ENCODE measurements at regions of chr1 and their contacts with region 1.

Region 1: GRCh38 chr1:20574686-20575540 is 14.0 kb upstream of the CDA start:
- DNase-seq: peak; percentile 87
- H3K4me3 ChIP-seq: no peak overlapping the region
- H3K27ac ChIP-seq: no peak overlapping the region
- H3K4me1 ChIP-seq: peaks cover 5% of the 10 kb centered on the region
- H3K27me3 ChIP-seq: peaks cover 5 to 6% of the 10 kb centered on the region in 2 experiments
- CTCF ChIP-seq: peak; percentile 74 to 88
- POLR2A ChIP-seq: no peak

Region 2: GRCh38 chr1:20376880-20377494 is 197.9 kb before region 1 on chr1:
- CTCF ChIA-PET with region 1: no interaction called
- POLR2A ChIA-PET with region 1: no interaction called
- dilution Hi-C with region 1: no loop called
- intact Hi-C with region 1: no loop called
- DNase-seq: peak; percentile 58
- H3K4me3 ChIP-seq: no peak overlapping the region
- H3K27ac ChIP-seq: no peak overlapping the region
- H3K4me1 ChIP-seq: no peaks in the 10 kb centered on the region
- H3K27me3 ChIP-seq: no peaks in the 10 kb centered on the region
- CTCF ChIP-seq: peak; percentile 73 to 91
- POLR2A ChIP-seq: no peak

Region 3: GRCh38 chr1:20507564-20508410 is 67.1 kb before region 1 on chr1 and contains the start of gene MUL1:
- CTCF ChIA-PET with region 1: interaction called, 3 read pairs
- POLR2A ChIA-PET with region 1: no interaction called
- dilution Hi-C with region 1: no loop called
- intact Hi-C with region 1: loop called (anchors 2 kb)
- DNase-seq: peak; percentile 88
- H3K4me3 ChIP-seq: peak within 1 kb of the TSS; percentile 70 to 94 (median 94)
- H3K27ac ChIP-seq: peak within 1 kb of the TSS; percentile 80
- H3K4me1 ChIP-seq: peaks cover 11% of the 10 kb centered on the region
- H3K27me3 ChIP-seq: peaks cover 2 to 3% of the 10 kb centered on the region in 2 experiments
- CTCF ChIP-seq: no peak
- POLR2A ChIP-seq: peak; percentile 79
- total RNA-seq, gene MUL1: 23.9 and 28.3 TPM in 2 replicates

Region 4: DNA sequence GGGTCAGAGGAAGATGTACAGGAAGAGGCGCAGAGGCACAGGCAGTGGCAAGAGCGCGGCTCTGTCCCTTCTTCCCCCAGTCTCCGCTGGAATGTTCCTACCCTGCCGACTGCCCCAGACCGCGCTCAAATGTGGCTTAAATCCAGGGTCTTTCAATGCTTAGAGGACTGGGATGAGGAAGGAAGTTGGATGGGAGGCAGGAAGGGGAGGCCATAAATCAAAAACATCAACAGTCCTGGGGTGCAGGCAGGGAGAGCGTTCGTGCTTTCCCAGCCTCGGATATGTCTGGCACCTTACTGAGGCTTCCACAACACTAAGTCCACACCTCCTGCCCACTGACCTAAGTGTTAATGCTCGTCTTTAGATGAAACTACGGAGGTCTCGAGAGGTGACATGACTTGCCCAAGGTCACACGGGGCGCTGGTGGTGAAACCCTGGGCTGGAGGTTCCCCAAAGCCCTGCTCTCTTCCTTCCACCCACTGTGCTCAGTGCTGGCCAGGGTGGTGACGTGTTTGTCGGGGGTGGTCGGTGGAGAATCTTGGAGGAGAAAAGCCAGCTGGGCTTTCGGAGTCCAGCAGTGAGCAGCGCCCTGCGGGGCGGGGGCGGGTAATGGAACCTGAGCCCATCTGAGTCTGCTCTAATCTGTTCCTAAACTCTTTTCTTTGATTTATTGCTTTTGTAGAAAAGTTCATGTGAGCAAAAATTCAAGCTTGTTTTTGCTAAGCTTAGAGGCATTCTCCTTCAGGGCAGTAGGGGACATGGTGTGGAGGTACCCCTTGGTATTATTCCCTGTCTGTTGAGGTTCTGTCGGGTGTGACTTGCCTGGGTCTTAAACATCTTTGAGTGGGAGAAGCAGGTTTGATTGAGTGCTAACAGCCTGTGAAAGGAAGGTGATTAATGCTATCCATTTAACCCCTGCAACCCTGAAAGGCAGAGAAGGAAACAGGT is 14.7 kb after region 1 on chr1:
- CTCF ChIA-PET with region 1: interaction called, 25 read pairs
- POLR2A ChIA-PET with region 1: no interaction called
- dilution Hi-C with region 1: no loop called
- intact Hi-C with region 1: no loop called
- DNase-seq: peak; percentile 88
- H3K4me3 ChIP-seq: peak overlapping the region in 1 of 3 experiments; percentile 20
- H3K27ac ChIP-seq: no peak overlapping the region
- H3K4me1 ChIP-seq: peaks cover 15% of the 10 kb centered on the region
- H3K27me3 ChIP-seq: peaks cover 2 to 13% of the 10 kb centered on the region in 2 experiments
- CTCF ChIP-seq: no peak
- POLR2A ChIP-seq: no peak

Region 5: GRCh38 chr1:20633190-20634064 is 58.5 kb after region 1 on chr1 and contains the start of gene PINK1:
- CTCF ChIA-PET with region 1: interaction called, 173 read pairs
- POLR2A ChIA-PET with region 1: interaction called, 6 read pairs
- dilution Hi-C with region 1: no loop called
- intact Hi-C with region 1: loop called (anchors 1 kb)
- DNase-seq: peak; percentile 87
- H3K4me3 ChIP-seq: peak within 1 kb of the TSS; percentile 89 to 95 (median 95)
- H3K27ac ChIP-seq: peak within 1 kb of the TSS; percentile 40
- H3K4me1 ChIP-seq: peaks cover 10% of the 10 kb centered on the region
- H3K27me3 ChIP-seq: no peaks in the 10 kb centered on the region
- CTCF ChIP-seq: peak; percentile 97 to 100
- POLR2A ChIP-seq: peak; percentile 60
- total RNA-seq, gene PINK1: 25.6 and 27.3 TPM in 2 replicates

Region 6: GRCh38 chr1:20645414-20645813 is 70.5 kb after region 1 on chr1:
- CTCF ChIA-PET with region 1: interaction called, 22 read pairs
- POLR2A ChIA-PET with region 1: no interaction called
- dilution Hi-C with region 1: no loop called
- intact Hi-C with region 1: loop called (anchors 1 kb)
- DNase-seq: no peak
- H3K4me3 ChIP-seq: no peak overlapping the region
- H3K27ac ChIP-seq: no peak overlapping the region
- H3K4me1 ChIP-seq: no peaks in the 10 kb centered on the region
- H3K27me3 ChIP-seq: no peaks in the 10 kb centered on the region
- CTCF ChIP-seq: no peak
- POLR2A ChIP-seq: no peak